PC-9 (cell line): ENCODE measurements at regions of chr1 and their contacts with region 1.

Region 1: DNA sequence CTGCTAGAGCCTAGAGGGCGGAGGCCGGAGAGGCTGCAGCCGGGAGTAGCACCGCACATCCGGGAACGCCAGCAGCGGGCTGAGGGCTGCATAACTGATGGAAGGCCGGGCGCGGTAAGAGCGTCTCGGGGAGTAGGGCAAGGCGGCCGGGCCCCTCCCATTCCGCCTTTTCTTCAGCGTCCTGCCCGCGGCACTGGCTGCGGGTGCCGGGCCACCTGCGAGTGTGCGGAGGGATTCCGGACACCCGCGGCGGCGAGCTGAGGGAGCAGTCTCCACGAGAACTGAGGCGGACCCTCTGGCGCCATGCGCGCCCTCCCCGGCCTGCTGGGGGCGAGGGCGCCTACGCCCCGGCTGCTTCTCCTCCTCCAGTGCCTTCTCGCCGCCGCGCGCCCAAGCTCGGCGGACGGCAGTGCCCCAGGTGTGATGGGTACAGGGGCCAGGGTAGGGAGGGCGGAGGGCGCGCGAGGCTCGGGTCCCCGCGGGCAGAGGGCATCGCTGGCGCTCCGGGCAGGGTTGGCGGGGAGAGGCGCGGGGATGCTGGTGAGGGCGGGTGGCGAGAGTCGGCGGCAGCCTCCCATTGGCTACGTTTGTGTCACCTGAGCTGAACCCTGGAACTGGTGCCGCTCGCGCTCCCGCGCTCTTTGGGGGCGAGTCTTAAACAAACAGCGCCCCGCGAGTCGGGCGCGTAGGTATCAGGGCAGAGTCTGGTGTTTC is 334.4 kb downstream of the SRGAP2C start:
- DNase-seq: peak; percentile 57 to 74
- H3K4me3 ChIP-seq: peak overlapping the region; percentile 90
- H3K27ac ChIP-seq: no peak overlapping the region
- H3K4me1 ChIP-seq: peaks cover 11% of the 10 kb centered on the region; the same call in 1 of the 2 replicates
- H3K27me3 ChIP-seq: no peaks in the 10 kb centered on the region
- CTCF ChIP-seq: no peak

Region 2: GRCh38 chr1:121445679-121446078 is 73.5 kb before region 1 on chr1:
- CTCF ChIA-PET with region 1: no interaction called
- POLR2A ChIA-PET with region 1: no interaction called
- intact Hi-C with region 1: loop called (anchors 5 kb)
- DNase-seq: no peak
- H3K4me3 ChIP-seq: no peak overlapping the region
- H3K27ac ChIP-seq: no peak overlapping the region
- H3K4me1 ChIP-seq: no peaks in the 10 kb centered on the region
- H3K27me3 ChIP-seq: no peaks in the 10 kb centered on the region
- CTCF ChIP-seq: no peak

Region 3: DNA sequence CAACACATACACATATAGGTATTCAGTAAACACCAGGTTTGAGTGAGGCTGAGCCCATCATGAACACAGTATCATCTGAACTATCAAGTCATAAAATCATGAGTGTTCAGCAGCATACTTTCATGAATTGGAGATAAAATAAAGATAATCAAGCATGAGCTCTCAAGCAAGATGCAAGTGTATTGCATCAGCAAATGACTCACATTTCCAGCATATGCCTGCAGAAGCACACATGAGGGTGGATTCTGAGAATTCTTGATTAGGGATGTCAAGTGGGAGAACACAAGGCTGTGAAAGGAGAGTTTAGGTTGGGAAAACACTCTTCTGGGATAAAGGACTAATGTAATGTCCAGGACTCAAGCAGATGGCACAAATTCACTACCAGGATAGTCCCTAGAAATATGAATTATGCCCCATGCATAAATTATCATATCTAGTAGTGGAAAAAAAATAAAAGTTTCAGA is 35.2 kb before region 1 on chr1:
- CTCF ChIA-PET with region 1: no interaction called
- POLR2A ChIA-PET with region 1: no interaction called
- intact Hi-C with region 1: no loop called
- DNase-seq: no peak
- H3K4me3 ChIP-seq: no peak overlapping the region
- H3K27ac ChIP-seq: peak overlapping the region; percentile 59
- H3K4me1 ChIP-seq: peaks cover 10% of the 10 kb centered on the region
- H3K27me3 ChIP-seq: no peaks in the 10 kb centered on the region
- CTCF ChIP-seq: no peak

Region 4: DNA sequence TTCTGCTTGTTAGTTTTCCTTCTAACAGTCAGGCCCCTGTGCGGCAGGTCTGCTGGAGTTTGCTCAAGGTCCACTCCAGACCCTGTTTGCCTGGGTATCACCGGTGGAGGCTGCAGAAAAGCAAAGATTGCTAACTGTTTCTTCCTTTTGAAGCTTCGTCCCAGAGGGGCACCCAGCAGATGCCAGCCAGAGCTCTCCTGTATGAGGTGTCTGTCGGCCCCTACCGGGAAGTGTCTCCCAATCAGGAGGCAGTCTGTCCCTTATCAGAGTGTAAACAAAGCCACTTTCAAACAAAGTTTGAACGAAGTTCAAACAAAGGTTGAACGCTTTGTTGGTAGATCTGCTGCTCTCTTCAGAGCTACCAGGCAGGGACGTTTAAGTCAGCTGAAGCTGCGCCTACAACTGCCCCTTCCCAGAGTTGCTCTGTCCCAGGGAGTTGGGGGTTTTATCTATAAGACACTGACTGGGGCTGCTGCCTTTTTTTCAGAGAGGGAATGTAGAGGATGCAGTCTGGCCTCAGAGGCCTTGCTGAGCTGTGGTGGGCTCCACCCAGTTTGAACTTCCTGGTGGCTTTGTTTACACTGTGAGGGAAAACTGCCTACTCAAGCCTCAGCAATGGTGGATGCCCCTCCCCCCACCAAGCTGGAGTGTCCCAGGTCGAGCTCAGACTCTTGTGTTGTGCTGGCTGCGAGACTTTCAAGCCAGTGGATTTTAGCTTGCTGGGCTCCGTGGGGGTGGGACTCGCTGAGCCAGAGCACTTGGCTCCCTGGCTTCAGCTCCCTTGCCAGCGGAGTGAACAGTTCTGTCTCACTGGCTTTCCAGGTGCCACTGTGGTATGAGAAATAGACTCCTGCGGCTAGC is 67.4 kb after region 1 on chr1:
- CTCF ChIA-PET with region 1: no interaction called
- POLR2A ChIA-PET with region 1: no interaction called
- intact Hi-C with region 1: no loop called
- DNase-seq: peak; percentile 49 to 50
- H3K4me3 ChIP-seq: no peak overlapping the region
- H3K27ac ChIP-seq: no peak overlapping the region
- H3K4me1 ChIP-seq: peaks cover 24% of the 10 kb centered on the region
- H3K27me3 ChIP-seq: no peaks in the 10 kb centered on the region
- CTCF ChIP-seq: no peak